ENCODE measurements at regions of chr11 and their contacts with region 1.

Region 1: DNA sequence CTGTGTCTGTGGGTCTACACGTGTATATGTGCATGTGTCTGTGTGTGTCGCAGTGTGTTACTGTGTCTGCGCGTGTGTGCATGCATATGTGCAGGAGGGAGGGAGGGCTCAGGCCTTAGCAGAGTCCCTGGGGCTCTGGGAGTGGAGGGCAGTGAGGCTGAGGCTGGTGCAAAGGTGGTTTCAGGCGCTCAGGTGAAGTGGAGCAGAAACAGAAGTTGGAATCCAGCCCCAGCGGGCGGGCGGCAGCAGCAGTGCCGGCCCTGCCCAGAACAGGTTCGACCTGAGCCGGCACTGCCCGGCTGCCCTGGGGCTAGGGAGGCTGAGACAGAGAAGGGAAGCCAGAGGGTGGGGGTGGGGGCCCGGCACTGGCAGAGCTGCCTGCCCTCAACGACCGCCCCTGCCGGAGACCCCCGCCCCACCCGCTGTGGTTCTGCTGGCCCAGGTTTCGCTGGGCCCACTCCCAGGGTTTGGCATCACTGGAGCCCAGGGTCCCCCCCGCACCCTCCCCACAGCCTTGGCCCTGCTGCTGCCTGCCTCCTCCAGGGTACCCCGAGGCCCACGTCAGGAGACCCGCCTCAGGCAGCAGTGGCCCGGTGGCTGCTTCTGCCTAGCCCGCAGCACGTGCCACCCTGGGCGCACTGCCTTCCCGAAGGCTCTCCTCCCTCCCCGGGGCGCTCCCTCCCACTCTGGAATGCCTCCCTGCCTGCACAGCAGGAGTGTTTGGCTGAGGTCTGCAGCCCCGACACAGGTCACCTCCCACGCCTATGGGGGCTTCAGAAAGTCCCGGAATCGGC is 13.3 kb downstream of the ASCL2 start:
- DNase-seq: peak in 2 of 9 experiments; percentile 6 to 41
- ATAC-seq: no peak
- H3K4me3 ChIP-seq: no peak overlapping the region
- H3K4me3 Mint-ChIP-seq: no peak overlapping the region
- H3K27ac ChIP-seq: no peak overlapping the region
- H3K27ac Mint-ChIP-seq: no peak overlapping the region
- H3K4me1 ChIP-seq: no peaks in the 10 kb centered on the region
- H3K4me1 Mint-ChIP-seq: no peaks in the 10 kb centered on the region
- H3K27me3 ChIP-seq: no peaks in the 10 kb centered on the region
- H3K27me3 Mint-ChIP-seq: no peaks in the 10 kb centered on the region
- CTCF ChIP-seq: no peak

Region 2: GRCh38 chr11:2208691-2209369 is 48.3 kb before region 1 on chr11:
- CTCF ChIA-PET with region 1: no interaction called
- POLR2A ChIA-PET with region 1: no interaction called
- intact Hi-C with region 1: loop called in 1 of 2 experiments (anchors 10 kb)
- DNase-seq: peak in 2 of 9 experiments; percentile 3 to 5
- ATAC-seq: no peak
- H3K4me3 ChIP-seq: no peak overlapping the region
- H3K4me3 Mint-ChIP-seq: no peak overlapping the region
- H3K27ac ChIP-seq: no peak overlapping the region
- H3K27ac Mint-ChIP-seq: no peak overlapping the region
- H3K4me1 ChIP-seq: peaks cover 12% of the 10 kb centered on the region
- H3K4me1 Mint-ChIP-seq: peaks cover 9% of the 10 kb centered on the region
- H3K27me3 ChIP-seq: no peaks in the 10 kb centered on the region
- H3K27me3 Mint-ChIP-seq: no peaks in the 10 kb centered on the region
- CTCF ChIP-seq: no peak

Measured in CD8-positive, alpha-beta T cell (primary cell).